Esophagus squamous epithelium (tissue), 5 donors: ENCODE measurements at regions of chr21 and their contacts with region 1.

Region 1: DNA sequence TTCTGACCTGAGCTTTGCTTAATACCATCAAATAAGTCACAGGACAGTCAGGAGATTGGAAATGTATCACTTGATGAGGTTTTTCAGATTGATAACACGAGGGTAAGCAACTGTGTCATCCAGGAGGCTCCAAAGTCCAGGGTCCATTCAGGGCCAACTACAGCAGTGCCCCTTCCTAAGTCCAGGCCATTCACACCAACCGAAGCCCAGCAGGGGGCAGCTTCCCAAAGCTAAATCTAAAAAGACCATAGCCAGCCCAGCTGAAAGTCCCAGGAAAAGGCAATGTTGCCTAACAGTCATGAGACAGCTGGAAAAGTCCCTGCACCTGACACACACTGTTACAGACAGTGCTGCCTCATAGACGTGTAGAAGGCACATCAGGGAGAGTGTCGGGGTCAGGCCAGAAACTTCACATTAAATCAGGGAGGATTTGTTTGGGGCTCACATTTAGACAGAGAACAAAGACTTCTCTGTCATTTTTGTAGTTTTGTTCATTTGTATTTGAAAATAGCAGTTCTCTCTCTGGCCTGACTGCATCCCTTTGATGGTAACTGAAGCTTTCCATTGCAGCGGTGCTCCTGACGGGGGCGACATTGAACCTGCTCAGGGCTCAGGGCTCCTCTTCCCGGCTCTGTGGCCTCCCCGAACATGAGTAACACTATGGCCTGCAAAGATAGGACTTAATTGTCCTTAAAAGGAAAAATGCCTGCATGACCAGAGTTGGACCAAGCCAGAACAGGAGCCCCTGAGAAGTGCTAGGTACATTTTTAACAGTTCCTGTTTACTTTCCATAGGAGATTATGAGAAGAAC is 200.4 kb downstream of the NRIP1 start:
- DNase-seq: no peak
- H3K4me3 ChIP-seq: no peak overlapping the region
- H3K27ac ChIP-seq: no peak overlapping the region
- H3K4me1 ChIP-seq: peaks cover 15 to 52% (median 19%) of the 10 kb centered on the region in 3 donors
- H3K27me3 ChIP-seq: no peaks in the 10 kb centered on the region
- CTCF ChIP-seq: peak; percentile 10 to 56 (median 32)
- POLR2A ChIP-seq: no peak

Region 2: GRCh38 chr21:14923468-14923867 is 59.1 kb after region 1 on chr21:
- intact Hi-C with region 1: no loop called
- DNase-seq: no peak
- H3K4me3 ChIP-seq: no peak overlapping the region
- H3K27ac ChIP-seq: no peak overlapping the region
- H3K4me1 ChIP-seq: peaks cover 0 to 8% (median 0%) of the 10 kb centered on the region in 3 donors
- H3K27me3 ChIP-seq: no peaks in the 10 kb centered on the region
- CTCF ChIP-seq: no peak
- POLR2A ChIP-seq: no peak

Region 3: DNA sequence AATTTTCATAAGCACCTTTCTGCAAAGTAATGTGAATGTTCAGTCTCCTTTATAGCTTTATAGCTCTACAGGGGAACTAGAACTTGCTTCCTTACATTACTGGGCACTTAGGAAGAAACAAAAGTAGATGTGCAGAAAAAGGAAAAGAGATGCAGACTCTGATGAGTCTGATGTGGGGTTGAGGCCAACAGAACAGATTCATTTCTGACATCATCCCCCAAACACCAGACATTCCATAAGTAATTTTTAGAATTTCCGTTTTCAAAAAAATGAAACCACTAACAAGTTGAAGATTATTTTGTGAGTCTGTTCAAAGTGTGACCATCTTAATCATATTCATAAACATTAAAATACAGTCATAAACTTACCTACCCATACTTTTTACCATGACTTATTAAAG is 104.4 kb after region 1 on chr21:
- intact Hi-C with region 1: no loop called
- DNase-seq: no peak
- H3K4me3 ChIP-seq: no peak overlapping the region
- H3K27ac ChIP-seq: no peak overlapping the region
- H3K4me1 ChIP-seq: no peaks in the 10 kb centered on the region
- H3K27me3 ChIP-seq: no peaks in the 10 kb centered on the region
- CTCF ChIP-seq: no peak
- POLR2A ChIP-seq: no peak

Region 4: GRCh38 chr21:15483138-15483780 is 618.8 kb after region 1 on chr21:
- intact Hi-C with region 1: loop called (anchors 10 kb)
- DNase-seq: peak; percentile 11
- H3K4me3 ChIP-seq: no peak overlapping the region
- H3K27ac ChIP-seq: no peak overlapping the region
- H3K4me1 ChIP-seq: peaks cover 0 to 3% (median 0%) of the 10 kb centered on the region in 3 donors
- H3K27me3 ChIP-seq: no peaks in the 10 kb centered on the region
- CTCF ChIP-seq: peak; percentile 67 to 93 (median 90)
- POLR2A ChIP-seq: no peak